Vagina (tissue), 2 donors: ENCODE measurements at regions of chr4 and their contacts with region 1.

Region 1: GRCh38 chr4:159564615-159565014 is 461.7 kb downstream of the RAPGEF2 start:
- DNase-seq: no peak
- H3K4me3 ChIP-seq: no peak overlapping the region
- H3K27ac ChIP-seq: no peak overlapping the region
- H3K4me1 ChIP-seq: no peaks in the 10 kb centered on the region
- H3K27me3 ChIP-seq: no peaks in the 10 kb centered on the region
- CTCF ChIP-seq: no peak
- POLR2A ChIP-seq: no peak

Region 2: GRCh38 chr4:159117968-159118367 is 446.6 kb before region 1 on chr4:
- intact Hi-C with region 1: loop called (anchors 5 kb)
- DNase-seq: no peak
- H3K4me3 ChIP-seq: no peak overlapping the region
- H3K27ac ChIP-seq: no peak overlapping the region
- H3K4me1 ChIP-seq: no peaks in the 10 kb centered on the region
- H3K27me3 ChIP-seq: no peaks in the 10 kb centered on the region
- CTCF ChIP-seq: no peak
- POLR2A ChIP-seq: no peak

Region 3: DNA sequence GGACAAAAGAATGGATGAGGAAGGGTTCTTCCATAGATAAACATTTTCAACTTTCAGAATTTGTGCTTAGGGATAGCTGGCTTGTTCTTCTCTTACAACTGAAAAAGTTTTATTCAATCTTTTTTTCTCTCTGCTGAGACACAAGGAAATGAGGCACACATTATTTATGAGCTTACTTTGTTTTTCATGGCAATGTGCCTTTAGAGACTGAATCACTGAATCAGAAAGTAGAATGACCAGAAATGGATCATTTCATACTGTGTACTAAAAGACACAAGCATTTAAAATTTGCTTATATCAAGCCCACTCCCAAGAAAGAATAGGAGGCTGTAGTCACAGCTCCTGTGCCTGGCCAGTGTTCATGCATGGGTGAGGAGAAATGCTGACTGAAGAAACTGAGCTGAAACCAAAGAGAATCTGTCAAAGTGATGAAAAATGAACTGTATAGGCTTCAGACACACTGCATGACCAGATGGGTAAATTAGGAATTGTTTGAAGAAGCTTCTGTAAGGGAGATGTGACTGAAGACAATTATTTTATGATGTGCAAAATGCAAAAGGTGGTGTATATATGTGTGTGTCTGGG is 48.0 kb before region 1 on chr4:
- intact Hi-C with region 1: no loop called
- DNase-seq: no peak
- H3K4me3 ChIP-seq: no peak overlapping the region
- H3K27ac ChIP-seq: no peak overlapping the region
- H3K4me1 ChIP-seq: no peaks in the 10 kb centered on the region
- H3K27me3 ChIP-seq: no peaks in the 10 kb centered on the region
- CTCF ChIP-seq: no peak
- POLR2A ChIP-seq: no peak

Region 4: DNA sequence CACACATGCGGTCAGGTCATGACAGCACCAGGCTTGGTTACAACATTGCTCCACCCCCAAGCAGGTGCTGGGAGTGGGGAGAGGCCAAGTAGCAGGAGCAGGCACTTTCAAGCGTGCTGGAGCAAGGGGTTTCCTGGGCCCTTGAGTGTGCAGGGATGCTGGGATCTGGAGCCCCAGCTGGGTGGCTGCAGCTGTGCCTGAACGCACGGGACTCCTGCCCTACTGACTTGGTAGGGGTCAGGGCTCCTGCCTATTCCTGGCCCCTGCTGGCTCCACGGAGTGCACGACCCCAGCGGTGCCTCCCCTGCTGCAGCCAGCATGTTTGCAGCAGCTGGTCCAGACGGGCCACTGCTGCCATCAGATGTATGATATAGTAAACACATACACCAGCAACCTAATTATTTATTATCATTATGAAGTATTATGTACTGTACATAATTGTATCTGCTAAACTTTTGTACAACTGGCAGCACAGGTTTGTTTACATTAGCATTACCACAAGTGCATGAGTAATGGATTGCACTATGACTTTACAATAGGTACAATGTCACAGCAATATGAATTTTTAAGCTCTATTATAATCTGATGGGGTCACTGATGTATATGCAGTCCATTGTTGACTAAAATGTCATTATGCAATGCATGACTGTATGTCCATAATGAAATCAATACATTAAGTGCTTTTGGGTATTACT is 158.9 kb after region 1 on chr4:
- intact Hi-C with region 1: no loop called
- DNase-seq: no peak
- H3K4me3 ChIP-seq: no peak overlapping the region
- H3K27ac ChIP-seq: no peak overlapping the region
- H3K4me1 ChIP-seq: no peaks in the 10 kb centered on the region
- H3K27me3 ChIP-seq: no peaks in the 10 kb centered on the region
- CTCF ChIP-seq: no peak
- POLR2A ChIP-seq: no peak